K562 (cell line): ENCODE measurements at regions of chr17 and their contacts with region 1.

Region 1: DNA sequence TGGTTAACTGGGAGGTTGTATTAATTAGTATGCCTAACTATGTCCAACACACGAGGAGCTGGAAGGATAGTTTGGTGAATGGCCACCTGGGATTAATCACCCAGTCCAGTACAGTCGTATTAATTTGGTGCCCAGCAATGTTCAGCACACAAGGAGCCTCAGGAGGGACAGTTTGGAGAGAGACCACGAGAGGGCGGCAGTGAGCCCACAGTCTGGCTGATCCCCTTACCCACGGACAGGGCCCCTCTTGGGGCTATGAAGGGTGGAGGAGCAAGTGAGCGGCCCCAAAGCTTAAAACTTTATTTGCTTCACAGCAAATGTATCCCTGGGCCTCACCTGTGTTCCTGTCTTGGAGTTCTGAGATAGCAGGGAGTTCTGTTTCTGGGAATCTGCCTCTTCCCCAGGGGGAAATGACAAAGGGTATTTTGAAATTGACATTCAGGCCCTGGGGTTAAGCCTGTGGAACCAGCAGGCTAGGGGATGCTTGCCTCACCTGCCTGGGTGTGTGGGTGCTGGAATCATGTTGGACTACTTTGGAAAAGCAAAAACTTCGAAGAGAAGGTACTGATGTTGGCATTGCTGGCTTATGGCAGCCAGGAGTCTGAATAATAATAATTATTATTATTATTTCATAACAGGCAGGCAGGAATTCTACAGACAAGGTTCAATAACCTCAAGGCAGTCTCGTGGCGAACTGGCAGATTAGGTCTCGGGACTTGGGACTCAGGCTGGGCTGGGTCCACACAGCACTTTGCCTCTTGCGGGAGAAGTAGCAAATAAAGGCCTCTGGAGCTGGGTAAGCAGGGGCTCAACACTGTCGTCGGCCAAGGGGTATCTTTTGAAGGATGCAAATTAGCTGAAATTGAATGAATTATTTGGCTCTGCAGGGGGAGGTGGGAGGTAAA is 227.6 kb upstream of the ASIC2 start:
- DNase-seq: peak; percentile 71 to 82 (median 78)
- ATAC-seq: peak; percentile 90
- H3K4me3 ChIP-seq: no peak overlapping the region
- H3K27ac ChIP-seq: no peak overlapping the region
- H3K4me1 ChIP-seq: 0 out of 5 replicates have a peak, but pooled peaks cover 0 to 5% of the 10 kb centered on the region in 2 experiments
- H3K27me3 ChIP-seq: peaks cover 3 to 9% of the 10 kb centered on the region in 2 experiments; a peak in 3 of 5 replicates
- CTCF ChIP-seq: peak; percentile 67 to 92 (median 80)
- EP300 ChIP-seq: no peak
- POLR2A ChIP-seq: no peak
- RAD21 ChIP-seq: peak; percentile 20 to 55; a peak in 3 of 4 replicates

Region 2: DNA sequence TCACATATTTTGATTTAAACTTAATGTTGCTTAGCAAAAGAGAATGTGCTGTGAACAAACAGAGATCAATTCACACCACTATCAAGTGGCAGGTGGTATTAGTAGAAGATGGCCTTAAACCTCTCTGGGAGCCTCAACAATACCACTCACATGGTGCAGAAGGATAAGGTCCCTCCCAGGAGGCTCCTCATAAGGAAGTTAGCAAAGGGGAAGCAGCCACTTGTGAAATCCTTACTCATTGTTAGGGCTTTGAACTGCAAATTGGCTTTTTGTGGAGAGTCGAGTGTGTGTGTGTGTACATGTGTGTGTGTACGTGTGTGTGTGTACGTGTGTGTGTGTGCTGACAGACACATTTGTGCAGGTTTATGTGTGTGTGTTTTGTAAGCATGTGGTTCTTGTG is 178.7 kb before region 1 on chr17:
- CTCF ChIA-PET with region 1: no interaction called
- POLR2A ChIA-PET with region 1: no interaction called
- in situ Hi-C with region 1: no loop called
- intact Hi-C with region 1: loop called (anchors 5 kb)
- DNase-seq: no peak
- ATAC-seq: no peak
- H3K4me3 ChIP-seq: no peak overlapping the region
- H3K27ac ChIP-seq: no peak overlapping the region
- H3K4me1 ChIP-seq: no peaks in the 10 kb centered on the region
- H3K27me3 ChIP-seq: peaks cover 4 to 14% of the 10 kb centered on the region in 2 experiments; a peak in 3 of 5 replicates
- CTCF ChIP-seq: no peak
- EP300 ChIP-seq: no peak
- POLR2A ChIP-seq: no peak
- RAD21 ChIP-seq: no peak

Region 3: GRCh38 chr17:33447090-33447489 is 73.6 kb before region 1 on chr17:
- CTCF ChIA-PET with region 1: no interaction called
- POLR2A ChIA-PET with region 1: interaction called, 3 read pairs
- in situ Hi-C with region 1: no loop called
- intact Hi-C with region 1: loop called (anchors 5 kb)
- DNase-seq: no peak
- ATAC-seq: no peak
- H3K4me3 ChIP-seq: no peak overlapping the region
- H3K27ac ChIP-seq: no peak overlapping the region
- H3K4me1 ChIP-seq: no peaks in the 10 kb centered on the region
- H3K27me3 ChIP-seq: peaks cover 3 to 5% of the 10 kb centered on the region in 2 experiments; a peak in 3 of 5 replicates
- CTCF ChIP-seq: no peak
- EP300 ChIP-seq: no peak
- POLR2A ChIP-seq: no peak
- RAD21 ChIP-seq: no peak

Region 4: DNA sequence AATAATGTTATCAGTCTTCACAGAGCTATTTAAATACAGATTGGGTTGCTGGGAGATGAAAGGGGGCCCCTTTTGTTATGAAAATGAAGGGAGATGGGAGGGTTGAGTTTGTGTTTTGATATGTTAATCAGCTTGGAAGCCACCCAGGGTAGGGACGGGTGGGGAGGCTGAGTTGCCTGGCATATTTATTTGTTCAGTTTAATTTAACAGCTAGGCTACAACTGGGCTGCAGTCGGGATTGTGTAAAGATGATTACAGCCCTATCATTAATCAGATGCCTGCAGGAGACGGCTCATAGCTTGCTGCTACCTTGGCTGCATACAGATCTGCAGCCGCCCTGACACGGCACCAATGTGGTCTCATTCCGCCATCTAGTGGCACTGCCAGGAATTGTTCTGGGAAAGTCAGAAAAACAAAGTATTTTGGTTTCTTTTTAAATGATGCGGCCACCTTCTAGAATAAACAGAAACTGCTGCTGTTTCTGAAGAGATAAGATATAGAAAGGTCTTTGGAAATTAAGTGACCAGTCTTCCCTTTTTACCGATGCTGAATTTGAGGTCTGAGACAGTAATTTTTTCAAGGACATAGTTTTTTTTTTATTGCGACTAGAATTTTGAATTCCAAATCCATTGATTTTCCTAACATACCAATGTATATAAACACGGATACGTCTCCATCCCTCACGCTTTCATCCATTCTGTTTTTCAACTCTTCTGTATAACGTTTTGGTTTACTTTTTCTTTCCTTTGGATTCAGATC is 230.4 kb after region 1 on chr17:
- CTCF ChIA-PET with region 1: no interaction called
- POLR2A ChIA-PET with region 1: no interaction called
- in situ Hi-C with region 1: no loop called
- intact Hi-C with region 1: loop called (anchors 5 kb)
- DNase-seq: peak; percentile 51 to 67 (median 63)
- ATAC-seq: peak; percentile 84
- H3K4me3 ChIP-seq: no peak overlapping the region
- H3K27ac ChIP-seq: no peak overlapping the region
- H3K4me1 ChIP-seq: no peaks in the 10 kb centered on the region
- H3K27me3 ChIP-seq: no peaks in the 10 kb centered on the region; a peak in 1 of 5 replicates
- CTCF ChIP-seq: peak; percentile 85 to 94 (median 93)
- EP300 ChIP-seq: no peak
- POLR2A ChIP-seq: no peak
- RAD21 ChIP-seq: peak; percentile 69 to 80